ENCODE measurements at regions of chr7 and their contacts with region 1.

Region 1: DNA sequence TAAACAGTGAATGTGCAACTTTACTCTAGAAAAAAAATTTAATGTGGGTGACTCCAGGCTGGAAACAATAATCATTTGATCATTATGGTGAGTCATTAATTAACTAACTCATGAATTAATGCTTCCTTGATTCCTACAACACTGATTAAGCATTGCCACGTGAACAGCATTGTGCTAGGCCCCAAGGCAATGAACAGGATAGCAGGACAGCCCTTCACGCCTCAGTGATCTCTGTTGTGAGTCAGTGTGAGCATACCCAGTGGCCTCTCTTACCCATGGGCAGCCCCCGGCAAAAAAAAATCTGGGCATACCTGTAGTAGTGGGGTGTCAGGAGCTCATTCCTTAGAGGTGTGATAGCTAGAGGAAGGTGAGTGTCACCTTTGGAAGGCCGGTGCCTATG is 76.0 kb downstream of the DENND2A start:
- DNase-seq: no peak
- ATAC-seq: no peak
- H3K4me3 ChIP-seq: no peak overlapping the region
- H3K27ac ChIP-seq: no peak overlapping the region
- H3K4me1 ChIP-seq: peaks cover 5 to 34% (median 22%) of the 10 kb centered on the region in 9 donors
- H3K27me3 ChIP-seq: no peaks in the 10 kb centered on the region
- CTCF ChIP-seq: no peak

Region 2: GRCh38 chr7:140506788-140507464 is 57.7 kb before region 1 on chr7:
- intact Hi-C with region 1: loop called in 2 of 10 experiments (anchors 5 to 10 kb)
- DNase-seq: peak; percentile 38 to 71
- ATAC-seq: peak; percentile 91 to 99 (median 96)
- H3K4me3 ChIP-seq: no peak overlapping the region
- H3K27ac ChIP-seq: peak overlapping the region; percentile 34 to 95 (median 82)
- H3K4me1 ChIP-seq: peaks cover 4 to 26% (median 13%) of the 10 kb centered on the region in 9 donors
- H3K27me3 ChIP-seq: no peaks in the 10 kb centered on the region
- CTCF ChIP-seq: peak in 5 of 9 donors; percentile 6 to 46 (median 32)

Region 3: DNA sequence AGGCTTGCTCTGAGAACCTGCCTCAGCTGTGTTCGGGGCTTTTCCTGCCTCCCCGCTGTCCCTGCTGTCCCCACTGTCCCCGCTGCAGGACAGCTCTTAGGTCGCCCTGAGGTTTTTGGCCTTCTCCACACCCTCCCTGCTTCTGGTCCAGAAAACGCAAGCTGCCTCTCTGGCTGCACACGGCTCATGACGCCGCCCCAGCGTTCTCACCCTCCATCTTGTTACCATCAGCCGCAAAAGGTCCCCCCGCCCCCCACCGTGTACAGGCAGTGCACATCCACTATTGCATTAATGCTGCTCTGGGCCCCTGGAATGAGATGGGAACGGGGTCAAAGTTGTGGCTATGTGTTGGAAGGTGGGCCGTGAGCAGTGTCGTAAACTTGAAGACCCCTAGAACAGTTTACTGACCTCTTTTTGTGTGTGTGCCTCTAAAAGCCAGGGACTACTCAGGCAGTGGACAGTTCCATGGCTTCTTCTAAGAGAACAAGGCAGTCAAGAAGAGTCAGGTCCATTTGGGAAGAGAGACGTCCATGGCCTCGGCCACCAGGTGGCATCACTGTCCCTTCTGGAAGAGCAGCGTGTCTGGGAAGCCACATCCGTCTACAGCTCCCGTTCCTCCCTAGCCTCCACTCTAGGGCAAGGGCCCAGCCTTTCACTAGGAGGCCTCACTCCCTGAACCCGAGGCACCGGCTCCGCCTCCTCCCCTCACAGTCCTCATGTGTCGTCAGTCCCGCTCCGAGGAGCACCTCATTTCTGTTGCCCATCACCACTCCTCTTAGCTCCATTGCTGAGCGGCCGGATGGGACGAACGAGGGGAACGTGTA is 46.9 kb before region 1 on chr7:
- intact Hi-C with region 1: loop called in 1 of 10 experiments (anchors 10 kb)
- DNase-seq: peak; percentile 90 to 91
- ATAC-seq: peak; percentile 86 to 96 (median 94)
- H3K4me3 ChIP-seq: peak overlapping the region in 1 of 10 donors; percentile 6
- H3K27ac ChIP-seq: peak overlapping the region in 7 of 10 donors; percentile 26 to 76 (median 48)
- H3K4me1 ChIP-seq: peaks cover 6 to 22% (median 16%) of the 10 kb centered on the region in 9 donors
- H3K27me3 ChIP-seq: no peaks in the 10 kb centered on the region
- CTCF ChIP-seq: peak; percentile 81 to 93 (median 88)